WTC11 (cell line): ENCODE measurements at regions of chr11 and their contacts with region 1.

Region 1: GRCh38 chr11:129375751-129376657 is at the start of gene BARX2:
- DNase-seq: peak; percentile 74
- ATAC-seq: peak; percentile 61
- H3K4me3 Mint-ChIP-seq: peak within 1 kb of the TSS; percentile 76
- H3K27ac Mint-ChIP-seq: no peak within 1 kb of the TSS
- H3K4me1 Mint-ChIP-seq: peaks cover 27% of the 10 kb centered on the region
- H3K27me3 Mint-ChIP-seq: peaks cover 88% of the 10 kb centered on the region
- CTCF ChIP-seq: no peak
- total RNA-seq, gene BARX2: not detected in 3 replicates

Region 2: DNA sequence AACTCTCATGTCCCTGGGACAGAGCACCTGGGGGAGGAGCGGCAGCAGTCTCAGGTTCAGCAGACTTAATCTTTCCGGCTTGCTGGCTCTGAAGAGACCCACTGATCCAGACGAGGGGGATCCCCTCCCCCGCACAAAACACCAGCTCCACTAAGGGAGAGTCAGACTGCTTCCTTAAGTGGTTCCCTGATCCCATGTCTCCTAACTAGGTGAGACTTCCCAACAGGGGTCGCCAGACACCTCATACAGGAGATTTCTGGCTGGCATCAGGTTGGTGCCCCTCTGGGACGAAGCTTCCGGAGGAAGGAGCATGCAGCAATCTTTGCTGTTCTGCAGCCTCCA is 282.5 kb after region 1 on chr11:
- CTCF ChIA-PET with region 1: interaction called, 15 read pairs
- POLR2A ChIA-PET with region 1: no interaction called
- DNase-seq: peak; percentile 47
- ATAC-seq: peak; percentile 95
- H3K4me3 Mint-ChIP-seq: no peak overlapping the region
- H3K27ac Mint-ChIP-seq: no peak overlapping the region
- H3K4me1 Mint-ChIP-seq: peaks cover 10% of the 10 kb centered on the region
- H3K27me3 Mint-ChIP-seq: no peaks in the 10 kb centered on the region; the same call in 1 of the 2 replicates
- CTCF ChIP-seq: no peak